CD4-positive, alpha-beta memory T cell (primary cell): ENCODE measurements at regions of chr1 and their contacts with region 1.

Region 1: GRCh38 chr1:1374929-1375662 is at the start of gene AURKAIP1:
- DNase-seq: peak; percentile 95 to 98 (median 97)
- H3K4me3 ChIP-seq: peak within 1 kb of the TSS; percentile 42 to 73
- H3K4me3 Mint-ChIP-seq: peak within 1 kb of the TSS; percentile 86 to 96 (median 92)
- H3K27ac ChIP-seq: peak within 1 kb of the TSS; percentile 88
- H3K27ac Mint-ChIP-seq: peak within 1 kb of the TSS in 6 of 7 donors; percentile 93 to 99 (median 98)
- H3K4me1 ChIP-seq: peaks cover 46% of the 10 kb centered on the region
- H3K4me1 Mint-ChIP-seq: peaks cover 6 to 44% (median 26%) of the 10 kb centered on the region in 4 donors
- H3K27me3 ChIP-seq: no peaks in the 10 kb centered on the region
- H3K27me3 Mint-ChIP-seq: no peaks in the 10 kb centered on the region
- total RNA-seq, gene AURKAIP1: 60.4 to 72.7 TPM

Region 2: GRCh38 chr1:1307908-1308755 is 67.0 kb before region 1 on chr1 and contains the starts of genes ACAP3 and PUSL1:
- CTCF ChIA-PET with region 1: interaction called, 8 read pairs
- POLR2A ChIA-PET with region 1: interaction called, 8 read pairs
- intact Hi-C with region 1: loop called (anchors 1 kb)
- DNase-seq: peak; percentile 92 to 94 (median 92)
- H3K4me3 ChIP-seq: peak within 1 kb of the TSS; percentile 61 to 83
- H3K4me3 Mint-ChIP-seq: peak within 1 kb of the TSS; percentile 86 to 92 (median 89)
- H3K27ac ChIP-seq: peak within 1 kb of the TSS; percentile 77
- H3K27ac Mint-ChIP-seq: peak within 1 kb of the TSS; percentile 89 to 96 (median 91)
- H3K4me1 ChIP-seq: peaks cover 36% of the 10 kb centered on the region
- H3K4me1 Mint-ChIP-seq: peaks cover 13 to 29% (median 20%) of the 10 kb centered on the region in 4 donors
- H3K27me3 ChIP-seq: no peaks in the 10 kb centered on the region
- H3K27me3 Mint-ChIP-seq: no peaks in the 10 kb centered on the region
- total RNA-seq, gene ACAP3: 59.7 to 65.6 TPM
- total RNA-seq, gene PUSL1: 24.1 to 27.9 TPM

Region 3: GRCh38 chr1:1349256-1350012 is 25.7 kb before region 1 on chr1 and contains the start of gene DVL1:
- CTCF ChIA-PET with region 1: interaction called, 9 read pairs
- POLR2A ChIA-PET with region 1: interaction called, 24 read pairs
- intact Hi-C with region 1: loop called (anchors 2 kb)
- DNase-seq: peak; percentile 65 to 80 (median 71)
- H3K4me3 ChIP-seq: peak within 1 kb of the TSS in 1 of 2 donors; percentile 51
- H3K4me3 Mint-ChIP-seq: peak within 1 kb of the TSS; percentile 70 to 85 (median 78)
- H3K27ac ChIP-seq: peak within 1 kb of the TSS; percentile 43
- H3K27ac Mint-ChIP-seq: peak within 1 kb of the TSS in 5 of 7 donors; percentile 57 to 89 (median 64)
- H3K4me1 ChIP-seq: peaks cover 25% of the 10 kb centered on the region
- H3K4me1 Mint-ChIP-seq: peaks cover 4 to 35% (median 17%) of the 10 kb centered on the region in 4 donors
- H3K27me3 ChIP-seq: no peaks in the 10 kb centered on the region
- H3K27me3 Mint-ChIP-seq: peaks cover 3 to 11% of the 10 kb centered on the region in 2 donors
- total RNA-seq, gene DVL1: 43.7 to 44.6 TPM

Region 4: GRCh38 chr1:1406817-1407635 is 31.9 kb after region 1 on chr1 and contains the start of gene MRPL20:
- CTCF ChIA-PET with region 1: interaction called, 6 read pairs
- POLR2A ChIA-PET with region 1: interaction called, 149 read pairs
- intact Hi-C with region 1: loop called (anchors 1 kb)
- DNase-seq: peak; percentile 93 to 96 (median 95)
- H3K4me3 ChIP-seq: peak within 1 kb of the TSS; percentile 76 to 95
- H3K4me3 Mint-ChIP-seq: peak within 1 kb of the TSS; percentile 90 to 96 (median 94)
- H3K27ac ChIP-seq: peak within 1 kb of the TSS; percentile 93
- H3K27ac Mint-ChIP-seq: peak within 1 kb of the TSS; percentile 80 to 97 (median 95)
- H3K4me1 ChIP-seq: peaks cover 30% of the 10 kb centered on the region
- H3K4me1 Mint-ChIP-seq: peaks cover 13 to 51% (median 33%) of the 10 kb centered on the region in 4 donors
- H3K27me3 ChIP-seq: no peaks in the 10 kb centered on the region
- H3K27me3 Mint-ChIP-seq: no peaks in the 10 kb centered on the region
- total RNA-seq, gene MRPL20: 119 to 123 TPM

Region 5: GRCh38 chr1:1471389-1472052 is 96.4 kb after region 1 on chr1 and contains the start of gene ATAD3B:
- CTCF ChIA-PET with region 1: no interaction called
- POLR2A ChIA-PET with region 1: no interaction called
- intact Hi-C with region 1: no loop called
- DNase-seq: peak; percentile 87 to 92 (median 87)
- H3K4me3 ChIP-seq: peak within 1 kb of the TSS; percentile 54 to 83
- H3K4me3 Mint-ChIP-seq: peak within 1 kb of the TSS; percentile 84 to 97 (median 91)
- H3K27ac ChIP-seq: peak within 1 kb of the TSS; percentile 56
- H3K27ac Mint-ChIP-seq: peak within 1 kb of the TSS; percentile 77 to 99 (median 93)
- H3K4me1 ChIP-seq: peaks cover 24% of the 10 kb centered on the region
- H3K4me1 Mint-ChIP-seq: peaks cover 8 to 38% (median 19%) of the 10 kb centered on the region in 4 donors
- H3K27me3 ChIP-seq: no peaks in the 10 kb centered on the region
- H3K27me3 Mint-ChIP-seq: no peaks in the 10 kb centered on the region
- total RNA-seq, gene ATAD3B: 51.1 to 53.8 TPM